Dorsolateral prefrontal cortex (tissue), 120 donors: ENCODE measurements at regions of chr19 and their contacts with region 1.

Region 1: DNA sequence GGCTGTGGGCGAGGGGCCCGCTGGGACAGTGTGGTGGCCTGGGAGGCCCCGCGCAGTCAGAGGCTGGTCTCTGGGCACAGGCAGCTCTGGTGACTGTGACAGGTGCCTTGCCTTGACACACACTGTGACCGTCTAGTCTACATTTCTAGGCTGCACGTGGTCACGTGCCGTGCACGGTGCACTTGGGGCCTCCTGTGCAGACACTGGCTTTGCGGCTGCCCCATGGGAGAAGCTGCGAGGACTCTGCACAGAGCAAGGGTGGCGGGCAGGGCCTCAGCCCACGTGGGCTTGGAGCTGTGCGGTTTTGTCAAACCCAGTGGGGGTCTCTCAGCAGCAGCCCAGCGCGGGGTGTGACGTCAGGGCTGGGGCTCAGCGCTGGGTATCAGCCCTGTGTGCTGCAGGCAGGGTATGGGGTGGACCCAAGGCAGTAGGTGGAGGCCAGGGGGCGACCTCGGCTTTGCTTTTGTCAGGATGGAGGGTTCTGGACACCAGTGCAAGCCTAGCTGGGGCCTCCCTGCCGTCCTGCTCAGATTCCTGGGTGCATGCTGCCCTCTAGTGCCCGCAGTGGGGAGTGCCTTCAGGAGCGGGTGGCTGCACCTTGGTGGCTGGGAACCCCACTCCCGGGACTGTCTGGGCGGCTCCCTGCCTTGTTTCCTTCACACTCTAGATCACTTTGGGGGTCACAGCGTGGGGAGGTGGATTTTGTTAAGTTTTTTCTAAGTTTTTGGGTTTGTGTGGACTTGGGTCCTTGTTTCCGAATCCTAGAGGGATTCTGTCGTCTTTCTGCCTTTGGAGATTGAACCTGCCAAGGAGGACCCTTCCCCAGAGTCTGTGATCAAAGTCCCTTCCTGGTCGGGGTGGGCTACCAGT is 62.6 kb downstream of the KDM4B start:
- DNase-seq: peak; percentile 81 to 93 (median 88)
- H3K4me3 ChIP-seq: no peak overlapping the region
- H3K27ac ChIP-seq: peak overlapping the region in 42 of 59 donors; percentile 2 to 81 (median 42)
- H3K27me3 ChIP-seq: no peaks in the 10 kb centered on the region
- CTCF ChIP-seq: peak; percentile 70 to 99 (median 96)

Region 2: DNA sequence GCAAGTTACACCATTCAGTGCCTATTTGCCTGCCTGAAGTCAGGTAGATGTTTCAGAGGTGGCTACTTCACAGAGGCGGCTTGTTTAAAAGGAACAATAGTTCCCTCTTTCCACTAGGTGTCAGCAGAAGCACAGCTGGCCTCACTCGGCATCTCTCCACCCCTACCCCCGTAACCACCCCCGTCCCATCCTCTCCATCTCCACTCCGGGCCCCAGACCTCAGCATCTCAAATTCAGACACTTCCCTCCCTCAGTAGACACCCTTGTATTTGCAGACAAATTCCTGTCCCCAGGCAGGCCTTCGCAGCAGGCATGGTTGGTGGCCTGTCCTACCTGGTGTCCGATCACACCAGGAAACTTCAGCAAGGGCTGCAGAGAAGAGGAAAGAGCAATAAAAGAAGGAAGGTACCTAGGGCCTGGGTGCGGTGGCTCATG is 298.8 kb before region 1 on chr19:
- intact Hi-C with region 1: loop called in 1 of 2 experiments (anchors 5 kb)
- DNase-seq: peak in 7 of 10 donors; percentile 36 to 68 (median 56)
- H3K4me3 ChIP-seq: peak overlapping the region in 44 of 59 donors; percentile 0 to 52 (median 29)
- H3K27ac ChIP-seq: no peak overlapping the region
- H3K27me3 ChIP-seq: peaks cover 0 to 3% (median 0%) of the 10 kb centered on the region in 45 donors
- CTCF ChIP-seq: peak; percentile 44 to 82 (median 74)

Region 3: GRCh38 chr19:4807188-4807587 is 224.3 kb before region 1 on chr19:
- intact Hi-C with region 1: loop called (anchors 1 to 5 kb)
- DNase-seq: peak in 3 of 10 donors; percentile 53 to 72 (median 58)
- H3K4me3 ChIP-seq: no peak overlapping the region
- H3K27ac ChIP-seq: peak overlapping the region in 24 of 59 donors; percentile 19 to 77 (median 44)
- H3K27me3 ChIP-seq: no peaks in the 10 kb centered on the region
- CTCF ChIP-seq: no peak

Region 4: DNA sequence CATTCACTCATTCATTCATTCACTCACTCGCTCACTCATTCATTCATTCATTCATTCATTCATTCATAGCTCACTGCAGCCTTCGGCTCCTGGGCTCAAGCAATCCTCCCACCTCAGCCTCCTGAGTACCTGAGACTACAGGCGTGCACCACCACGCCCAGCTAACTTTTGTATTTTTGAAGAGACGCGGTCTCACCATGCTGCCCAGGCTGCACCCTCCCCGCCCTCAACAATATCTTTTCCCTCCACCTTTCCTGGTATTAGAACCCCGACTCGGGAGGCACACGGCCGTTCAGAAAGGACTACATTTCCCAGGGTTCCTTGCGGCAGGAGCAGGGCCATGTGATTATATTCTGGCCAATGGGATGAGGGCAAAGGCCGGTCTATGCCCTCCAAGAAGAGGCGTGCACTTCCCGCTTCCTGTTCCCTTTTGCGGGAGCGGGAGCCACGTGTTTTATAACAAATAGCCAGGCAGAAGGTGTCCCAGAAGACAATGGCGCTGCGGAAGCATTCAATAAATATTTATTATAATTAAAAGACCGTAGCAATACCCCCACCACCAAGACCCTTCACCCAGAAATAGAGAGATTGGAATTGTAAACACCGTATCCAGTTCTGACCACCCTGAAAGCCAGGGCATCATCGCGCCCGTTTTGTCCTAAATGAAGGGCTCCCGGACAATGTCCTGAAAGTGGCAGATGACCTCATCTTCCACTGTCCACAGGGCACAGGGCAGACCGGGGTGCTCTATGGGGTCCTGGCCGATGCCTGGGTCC is 215.9 kb before region 1 on chr19:
- intact Hi-C with region 1: loop called in 1 of 2 experiments (anchors 1 kb)
- DNase-seq: peak; percentile 81 to 96 (median 94)
- H3K4me3 ChIP-seq: peak overlapping the region; percentile 5 to 70 (median 46)
- H3K27ac ChIP-seq: peak overlapping the region in 39 of 59 donors; percentile 0 to 82 (median 53)
- H3K27me3 ChIP-seq: no peaks in the 10 kb centered on the region
- CTCF ChIP-seq: peak in 19 of 56 donors; percentile 9 to 59 (median 24)

Region 5: GRCh38 chr19:4867534-4868285 is 163.8 kb before region 1 on chr19 and contains the start of gene PLIN3:
- intact Hi-C with region 1: loop called (anchors 5 kb)
- DNase-seq: peak; percentile 51 to 95 (median 92)
- H3K4me3 ChIP-seq: peak within 1 kb of the TSS; percentile 51 to 88 (median 76)
- H3K27ac ChIP-seq: peak within 1 kb of the TSS; percentile 11 to 94 (median 84)
- H3K27me3 ChIP-seq: peaks cover 0 to 8% (median 0%) of the 10 kb centered on the region in 45 donors
- CTCF ChIP-seq: peak in 9 of 56 donors; percentile 6 to 37 (median 12)
- total RNA-seq, gene PLIN3: 10.5 to 104 (median 28.0) TPM

Region 6: DNA sequence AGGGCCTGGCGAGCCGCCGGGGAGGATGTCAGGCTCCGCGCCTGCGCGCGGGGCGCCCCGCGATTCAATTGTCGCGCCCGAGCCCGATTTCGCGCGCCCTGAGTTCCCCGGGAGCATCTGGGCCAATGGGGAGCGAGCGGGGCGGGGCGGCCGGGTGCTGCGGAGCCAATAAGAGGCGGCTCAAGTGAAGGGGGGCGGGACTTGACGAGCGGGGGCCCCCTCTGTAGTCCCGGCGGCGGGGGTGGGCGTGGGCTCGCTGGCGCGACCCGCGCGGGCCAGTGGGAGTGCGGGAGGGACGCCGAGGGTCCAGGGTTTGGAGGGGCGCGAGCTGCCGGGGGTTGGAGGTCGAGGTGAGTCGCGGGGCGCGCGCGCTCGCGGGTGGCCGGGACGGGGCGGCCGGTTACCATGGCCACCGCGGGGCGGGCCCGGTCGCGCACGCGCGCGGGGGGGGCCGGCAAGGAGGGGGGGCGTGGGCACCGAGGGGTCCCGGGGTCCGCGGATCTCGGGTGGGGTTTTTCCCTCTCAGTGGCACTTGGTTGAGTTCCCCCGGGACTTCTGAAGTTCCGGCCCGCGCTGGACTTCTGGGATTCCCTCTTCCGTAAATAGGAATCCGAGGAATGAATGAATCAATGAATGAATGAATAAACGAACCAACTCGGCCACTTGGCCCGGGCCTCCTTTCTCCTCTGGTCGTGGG is 121.4 kb before region 1 on chr19:
- intact Hi-C with region 1: loop called in 1 of 2 experiments (anchors 2 kb)
- DNase-seq: peak; percentile 88 to 95 (median 92)
- H3K4me3 ChIP-seq: peak overlapping the region; percentile 41 to 83 (median 71)
- H3K27ac ChIP-seq: peak overlapping the region in 50 of 59 donors; percentile 24 to 89 (median 74)
- H3K27me3 ChIP-seq: peaks cover 0 to 15% (median 0%) of the 10 kb centered on the region in 45 donors
- CTCF ChIP-seq: peak in 2 of 56 donors; percentile 4 to 28

Region 7: GRCh38 chr19:4968462-4969291 is 62.8 kb before region 1 on chr19 and contains the start of gene KDM4B:
- intact Hi-C with region 1: loop called (anchors 5 kb)
- DNase-seq: peak; percentile 98 to 100 (median 99)
- H3K4me3 ChIP-seq: peak within 1 kb of the TSS; percentile 49 to 85 (median 72)
- H3K27ac ChIP-seq: peak within 1 kb of the TSS in 51 of 59 donors; percentile 30 to 89 (median 77)
- H3K27me3 ChIP-seq: no peaks in the 10 kb centered on the region
- CTCF ChIP-seq: peak in 9 of 56 donors; percentile 4 to 43 (median 16)
- total RNA-seq, gene KDM4B: 35.7 to 91.2 (median 55.2) TPM